Body of pancreas (tissue), 4 donors: ENCODE measurements at regions of chr20 and their contacts with region 1.

Region 1: GRCh38 chr20:20824924-20825584 is 112.6 kb upstream of the RALGAPA2 start:
- DNase-seq: peak; percentile 54 to 65 (median 58)
- ATAC-seq: peak; percentile 64
- H3K4me3 ChIP-seq: no peak overlapping the region
- H3K27ac ChIP-seq: no peak overlapping the region
- H3K4me1 ChIP-seq: peaks cover 6% of the 10 kb centered on the region
- H3K27me3 ChIP-seq: no peaks in the 10 kb centered on the region
- CTCF ChIP-seq: peak; percentile 68 to 89 (median 75)
- POLR2A ChIP-seq: no peak

Region 2: DNA sequence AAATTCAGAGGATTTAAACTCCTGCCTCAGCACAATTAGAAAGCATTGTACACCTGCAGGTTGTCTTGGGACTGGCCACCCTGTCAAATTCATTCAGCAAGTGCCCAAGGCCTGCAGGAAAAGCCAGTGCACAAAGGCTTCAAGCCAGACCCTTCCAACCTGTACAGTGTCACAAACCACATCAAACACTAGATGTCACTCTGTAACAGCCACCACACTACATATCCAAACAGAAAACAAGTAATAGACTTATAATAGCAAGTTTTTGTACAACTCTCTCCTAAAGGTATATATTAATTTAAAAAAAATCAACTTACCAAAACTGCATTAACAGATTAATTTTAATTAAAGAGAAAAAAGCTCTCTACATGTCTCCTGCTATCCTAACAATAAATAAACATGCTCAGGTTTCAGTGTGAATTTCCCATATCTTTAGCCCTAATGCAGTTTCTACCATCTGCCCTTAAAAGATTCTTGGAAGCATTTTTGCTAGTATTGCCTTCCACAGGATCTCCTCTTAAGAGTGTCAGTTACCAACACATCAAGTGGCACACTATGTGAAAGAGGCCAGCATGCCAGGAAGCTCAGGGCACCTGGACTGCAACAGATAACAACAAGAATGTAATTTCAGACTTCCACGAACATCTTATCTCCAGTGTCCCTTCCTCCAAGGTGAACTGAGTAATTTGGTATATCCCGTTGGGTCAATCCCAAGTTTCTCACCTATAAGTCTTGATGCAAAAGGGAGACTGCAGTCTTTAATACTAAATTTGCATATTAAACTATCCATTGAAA is 160.1 kb before region 1 on chr20:
- intact Hi-C with region 1: loop called (anchors 5 kb)
- DNase-seq: peak in 2 of 4 donors; percentile 34 to 40
- ATAC-seq: peak; percentile 55
- H3K4me3 ChIP-seq: no peak overlapping the region
- H3K27ac ChIP-seq: no peak overlapping the region
- H3K4me1 ChIP-seq: peaks cover 15% of the 10 kb centered on the region
- H3K27me3 ChIP-seq: no peaks in the 10 kb centered on the region
- CTCF ChIP-seq: peak; percentile 31 to 72 (median 65)
- POLR2A ChIP-seq: no peak

Region 3: GRCh38 chr20:20860078-20860806 is 35.2 kb after region 1 on chr20:
- intact Hi-C with region 1: no loop called
- DNase-seq: peak; percentile 83 to 91 (median 86)
- ATAC-seq: peak; percentile 68
- H3K4me3 ChIP-seq: no peak overlapping the region
- H3K27ac ChIP-seq: no peak overlapping the region
- H3K4me1 ChIP-seq: no peaks in the 10 kb centered on the region
- H3K27me3 ChIP-seq: no peaks in the 10 kb centered on the region
- CTCF ChIP-seq: peak; percentile 84 to 95 (median 90)
- POLR2A ChIP-seq: no peak